Panc1 (cell line): ENCODE measurements at regions of chr1 and their contacts with region 1.

Region 1: DNA sequence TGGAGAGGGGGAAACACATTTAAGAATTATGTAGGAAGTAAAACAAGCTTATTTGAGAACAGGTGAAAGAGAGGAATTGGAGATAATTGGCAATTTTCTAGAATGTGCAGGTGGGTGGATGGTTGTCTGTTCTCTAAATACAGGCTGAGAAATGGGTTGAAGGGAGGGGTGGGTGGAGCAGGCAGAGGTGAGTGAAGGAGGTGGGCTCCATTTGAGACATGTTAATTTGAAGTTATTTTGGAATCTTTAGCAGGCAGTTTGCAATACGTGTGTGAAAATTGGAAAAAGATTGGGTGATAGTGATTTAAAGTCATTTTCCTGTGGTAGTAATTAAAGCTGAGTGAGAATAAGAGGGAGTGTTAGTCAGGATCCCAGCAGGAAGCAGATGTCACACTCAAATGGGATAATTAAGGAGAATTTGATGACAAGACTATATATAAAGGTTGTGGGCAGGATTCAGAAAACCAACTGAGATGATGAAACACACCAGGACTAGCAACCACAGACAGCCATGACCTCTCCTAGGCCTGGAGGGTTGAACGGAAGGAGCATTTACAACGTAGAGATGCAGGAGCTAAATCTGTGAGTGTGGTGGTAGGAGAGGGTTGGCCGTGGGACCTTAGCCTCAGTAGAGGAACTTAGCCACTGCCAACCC is 40.6 kb downstream of the CHRM3 start:
- DNase-seq: no peak
- ATAC-seq: no peak
- H3K4me3 ChIP-seq: no peak overlapping the region
- H3K27ac ChIP-seq: no peak overlapping the region
- H3K4me1 ChIP-seq: no peaks in the 10 kb centered on the region
- H3K27me3 ChIP-seq: no peaks in the 10 kb centered on the region
- CTCF ChIP-seq: no peak

Region 2: GRCh38 chr1:239457491-239458143 is 30.7 kb after region 1 on chr1:
- CTCF ChIA-PET with region 1: no interaction called
- POLR2A ChIA-PET with region 1: no interaction called
- in situ Hi-C with region 1: no loop called
- intact Hi-C with region 1: loop called (anchors 1 kb)
- DNase-seq: no peak
- ATAC-seq: no peak
- H3K4me3 ChIP-seq: no peak overlapping the region
- H3K27ac ChIP-seq: no peak overlapping the region
- H3K4me1 ChIP-seq: no peaks in the 10 kb centered on the region
- H3K27me3 ChIP-seq: no peaks in the 10 kb centered on the region
- CTCF ChIP-seq: no peak